ENCODE measurements at regions of chr5 and their contacts with region 1.

Region 1: DNA sequence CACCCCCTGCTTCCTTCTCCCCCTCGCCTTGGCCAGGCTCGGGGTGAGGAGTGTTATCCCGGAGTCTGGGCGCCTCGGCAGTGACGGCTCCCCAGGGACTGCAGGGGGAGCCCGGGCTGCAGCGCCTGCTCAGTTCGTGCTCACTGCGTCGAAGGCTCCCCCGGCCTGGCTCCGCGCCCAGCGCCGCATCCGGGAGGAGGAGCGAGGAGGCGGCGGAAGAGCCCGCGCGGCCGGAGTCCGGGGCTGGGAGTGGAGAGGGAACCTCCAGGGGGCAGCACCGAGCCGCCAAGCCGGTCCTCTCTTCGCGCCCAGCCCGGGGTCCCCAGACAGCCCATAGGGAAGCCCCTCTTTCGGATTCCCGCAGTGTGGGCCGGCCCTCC is 1.3 kb upstream of the EGR1 start:
- DNase-seq: peak; percentile 95
- CTCF ChIP-seq: peak; percentile 68

Region 2: DNA sequence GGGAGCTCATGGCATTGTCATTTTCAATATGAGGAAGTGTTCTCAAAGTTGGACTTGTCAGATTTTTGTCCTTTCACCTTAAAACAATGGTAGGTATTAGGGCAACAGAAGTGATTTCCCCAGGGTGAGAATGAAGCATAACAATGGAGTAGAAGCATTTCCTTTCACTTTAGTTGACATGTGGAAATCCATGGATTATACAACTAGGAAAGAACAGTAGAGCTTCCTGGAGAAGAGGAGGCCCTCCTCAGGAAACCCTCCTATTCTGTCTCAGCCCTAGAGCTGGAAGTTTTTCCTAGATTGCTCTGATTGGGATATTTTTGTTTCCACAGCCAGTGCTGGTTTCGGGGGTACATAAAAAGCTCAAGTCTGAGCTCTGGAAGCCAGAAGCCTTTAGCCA is 38.9 kb before region 1 on chr5:
- CTCF ChIA-PET with region 1: no interaction called
- POLR2A ChIA-PET with region 1: no interaction called
- DNase-seq: no peak
- CTCF ChIP-seq: no peak

Region 3: DNA sequence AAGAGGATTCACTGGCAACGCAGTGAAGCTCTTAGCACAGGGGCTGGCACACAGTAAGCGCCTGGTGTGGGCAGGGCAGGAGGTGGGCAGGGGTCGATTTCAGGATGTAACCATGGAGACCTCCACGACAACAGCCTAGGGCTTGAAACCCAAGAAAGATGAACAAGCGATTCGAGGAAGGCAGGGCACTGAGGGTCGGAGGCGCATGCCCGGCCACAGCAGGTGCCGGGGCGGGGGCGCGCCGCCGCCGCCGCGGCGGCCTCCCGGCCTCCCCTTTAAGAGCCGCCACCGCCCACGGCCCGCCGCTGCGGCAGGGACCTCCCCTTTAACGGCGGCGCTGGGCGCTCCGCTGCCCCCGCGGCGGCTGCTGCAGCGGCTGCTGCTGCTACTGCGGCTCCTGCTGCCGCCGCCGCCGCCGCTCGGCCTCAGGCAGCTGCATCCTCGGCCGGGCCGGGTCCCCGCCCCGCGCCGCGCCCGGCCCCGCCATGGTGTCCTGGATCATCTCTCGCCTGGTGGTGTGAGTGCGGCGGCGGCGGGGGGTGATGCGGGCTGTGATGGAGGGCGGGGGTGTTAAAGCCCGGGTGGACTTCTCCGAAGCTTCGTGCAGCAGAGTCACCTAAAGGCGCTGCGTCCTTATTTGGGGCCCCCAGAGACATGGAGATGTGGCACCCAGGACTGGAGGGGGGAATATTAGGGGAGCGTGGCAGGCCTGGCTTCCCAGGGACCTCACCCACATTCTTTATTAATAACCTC is 25.1 kb before region 1 on chr5 and contains the start of gene REEP2:
- CTCF ChIA-PET with region 1: no interaction called
- POLR2A ChIA-PET with region 1: interaction called, 10 read pairs
- DNase-seq: peak; percentile 90
- CTCF ChIP-seq: no peak

Region 4: DNA sequence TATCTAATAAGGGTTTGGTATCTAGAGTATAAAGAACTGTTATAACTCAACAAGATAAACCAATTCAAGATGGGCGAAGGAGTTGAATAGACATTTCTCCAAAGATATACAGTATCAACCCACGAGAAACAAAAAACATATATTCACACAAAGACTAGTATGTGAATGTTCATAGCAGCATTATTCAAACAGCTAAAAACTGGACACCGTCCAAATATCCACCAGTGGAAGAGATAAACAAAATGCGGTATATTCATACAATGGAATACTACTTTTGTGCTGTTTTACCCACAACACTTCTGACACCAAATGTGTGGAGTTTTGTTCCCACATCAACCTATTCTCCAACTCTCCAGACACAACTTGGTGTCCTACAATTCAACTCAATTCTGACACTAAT is 34.4 kb after region 1 on chr5:
- CTCF ChIA-PET with region 1: interaction called, 42 read pairs
- POLR2A ChIA-PET with region 1: interaction called, 9 read pairs
- DNase-seq: no peak
- CTCF ChIP-seq: no peak

Region 5: GRCh38 chr5:138542956-138543729 is 79.1 kb after region 1 on chr5 and contains the start of gene ETF1:
- CTCF ChIA-PET with region 1: interaction called, 3 read pairs
- POLR2A ChIA-PET with region 1: interaction called, 16 read pairs
- DNase-seq: peak; percentile 99
- CTCF ChIP-seq: no peak